PC-9 (cell line): ENCODE measurements at regions of chr5 and their contacts with region 1.

Region 1: GRCh38 chr5:37668524-37669047 is 171.3 kb downstream of the GDNF start:
- DNase-seq: peak; percentile 94 to 100
- H3K4me3 ChIP-seq: peak overlapping the region; percentile 21; the same call in 1 of the 2 replicates
- H3K27ac ChIP-seq: peak overlapping the region; percentile 90
- H3K4me1 ChIP-seq: peaks cover 23% of the 10 kb centered on the region
- H3K27me3 ChIP-seq: no peaks in the 10 kb centered on the region
- CTCF ChIP-seq: no peak

Region 2: DNA sequence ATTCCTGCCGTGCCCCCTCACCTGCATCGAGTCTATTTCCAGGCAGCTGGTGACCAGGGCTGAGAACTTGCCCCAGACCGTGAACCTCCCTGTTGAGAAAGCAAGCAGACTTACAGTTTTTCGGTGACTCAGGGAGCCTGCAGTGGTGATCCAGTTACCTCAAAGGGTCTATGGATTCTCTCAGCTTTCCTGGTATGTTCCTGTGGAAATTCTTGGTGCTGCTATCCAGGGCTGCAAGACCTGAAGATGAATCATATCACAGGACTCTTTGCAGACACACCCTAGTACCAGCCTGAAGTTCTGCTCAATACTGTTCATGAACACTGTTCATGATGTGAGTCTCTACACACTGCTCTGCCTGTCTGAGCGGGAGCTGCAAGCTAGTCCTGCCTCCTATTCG is 134.7 kb before region 1 on chr5:
- CTCF ChIA-PET with region 1: no interaction called
- POLR2A ChIA-PET with region 1: no interaction called
- intact Hi-C with region 1: loop called (anchors 2 kb)
- DNase-seq: peak; percentile 68 to 77
- H3K4me3 ChIP-seq: no peak overlapping the region
- H3K27ac ChIP-seq: peak overlapping the region; percentile 21
- H3K4me1 ChIP-seq: peaks cover 8% of the 10 kb centered on the region; the same call in 1 of the 2 replicates
- H3K27me3 ChIP-seq: no peaks in the 10 kb centered on the region
- CTCF ChIP-seq: no peak

Region 3: GRCh38 chr5:37696190-37697021 is 27.8 kb after region 1 on chr5:
- CTCF ChIA-PET with region 1: interaction called, 7 read pairs
- POLR2A ChIA-PET with region 1: no interaction called
- intact Hi-C with region 1: loop called (anchors 1 kb)
- DNase-seq: peak; percentile 65 to 88
- H3K4me3 ChIP-seq: no peak overlapping the region
- H3K27ac ChIP-seq: peak overlapping the region; percentile 75
- H3K4me1 ChIP-seq: peaks cover 28% of the 10 kb centered on the region
- H3K27me3 ChIP-seq: no peaks in the 10 kb centered on the region
- CTCF ChIP-seq: no peak

Region 4: DNA sequence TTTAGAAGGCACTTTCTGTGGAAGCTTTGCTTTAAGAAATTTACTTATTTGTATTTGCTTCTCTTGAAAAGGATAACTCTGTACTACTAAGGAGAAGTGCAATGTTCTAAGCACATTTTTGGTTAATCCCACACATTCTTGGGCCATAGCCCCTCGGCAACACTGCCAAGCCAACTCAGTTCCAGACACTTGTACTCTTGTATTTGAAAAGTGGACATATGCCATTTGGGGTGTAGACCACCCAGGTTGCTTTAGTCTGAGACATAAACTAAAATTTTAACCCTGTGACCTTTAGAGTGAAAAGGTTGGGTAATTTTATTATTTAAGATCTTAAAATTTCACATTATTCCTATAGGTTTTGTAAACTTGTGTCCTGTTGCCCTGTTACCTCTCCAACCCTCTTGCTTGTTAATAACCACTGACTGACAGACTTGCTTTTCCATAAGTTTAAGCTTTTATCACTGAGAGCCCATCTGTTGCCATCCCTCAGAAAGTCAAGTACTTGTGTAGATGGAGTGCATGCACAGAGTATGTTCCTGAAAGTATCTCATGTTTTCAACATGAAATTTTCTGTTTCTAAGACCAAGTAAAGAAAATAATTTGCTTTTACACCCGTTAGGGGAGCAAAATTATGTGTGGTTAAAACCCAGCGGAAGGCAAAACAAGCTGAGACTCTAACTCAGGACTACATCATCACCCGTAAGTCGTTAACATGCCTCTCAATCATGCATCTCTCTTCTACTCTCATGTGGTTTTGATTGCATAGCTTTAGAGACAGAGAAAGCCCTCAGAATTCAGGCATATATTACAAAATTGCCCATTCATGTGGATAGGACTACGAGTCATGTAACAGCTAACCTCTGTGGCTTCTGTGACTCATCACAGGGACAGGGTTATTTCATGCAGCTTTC is 53.9 kb after region 1 on chr5:
- CTCF ChIA-PET with region 1: no interaction called
- POLR2A ChIA-PET with region 1: no interaction called
- intact Hi-C with region 1: loop called (anchors 1 kb)
- DNase-seq: peak; percentile 32 to 93
- H3K4me3 ChIP-seq: no peak overlapping the region
- H3K27ac ChIP-seq: no peak overlapping the region
- H3K4me1 ChIP-seq: peaks cover 29% of the 10 kb centered on the region
- H3K27me3 ChIP-seq: no peaks in the 10 kb centered on the region
- CTCF ChIP-seq: no peak

Region 5: DNA sequence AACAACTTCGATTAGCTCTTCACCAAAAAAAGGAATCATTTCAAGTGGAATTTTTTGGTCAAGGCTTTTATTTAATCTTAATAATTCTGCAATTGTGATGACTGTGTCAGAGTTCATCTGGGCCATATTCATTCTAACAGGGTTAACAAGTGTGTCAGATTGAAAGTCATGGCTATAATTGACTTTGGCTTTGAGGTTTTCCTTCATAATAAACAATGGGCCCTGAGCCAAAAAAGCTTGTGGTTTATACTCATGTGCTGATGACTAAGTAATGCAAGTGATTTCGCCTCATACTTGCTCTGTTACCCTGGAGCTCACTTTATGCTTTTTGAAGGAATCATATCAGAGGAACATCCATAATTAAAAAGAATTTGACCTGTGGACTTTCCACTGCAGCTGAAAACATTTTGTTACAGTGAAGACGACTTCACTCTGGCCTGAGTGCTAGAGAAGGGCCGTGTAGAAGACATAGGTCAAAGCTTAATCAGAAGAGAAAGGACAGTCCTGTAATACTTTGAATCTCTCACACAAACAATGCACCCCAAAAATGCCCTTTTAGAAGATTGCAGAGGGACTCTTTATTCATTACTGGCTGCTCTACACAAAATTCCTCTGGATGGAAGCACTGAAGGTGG is 69.6 kb after region 1 on chr5:
- CTCF ChIA-PET with region 1: no interaction called
- POLR2A ChIA-PET with region 1: no interaction called
- intact Hi-C with region 1: loop called (anchors 2 kb)
- DNase-seq: peak; percentile 58 to 89
- H3K4me3 ChIP-seq: no peak overlapping the region
- H3K27ac ChIP-seq: peak overlapping the region; percentile 13
- H3K4me1 ChIP-seq: peaks cover 27% of the 10 kb centered on the region
- H3K27me3 ChIP-seq: no peaks in the 10 kb centered on the region
- CTCF ChIP-seq: no peak

Region 6: GRCh38 chr5:37757980-37758583 is 89.5 kb after region 1 on chr5:
- CTCF ChIA-PET with region 1: no interaction called
- POLR2A ChIA-PET with region 1: no interaction called
- intact Hi-C with region 1: no loop called
- DNase-seq: no peak
- H3K4me3 ChIP-seq: no peak overlapping the region
- H3K27ac ChIP-seq: no peak overlapping the region
- H3K4me1 ChIP-seq: no peaks in the 10 kb centered on the region
- H3K27me3 ChIP-seq: no peaks in the 10 kb centered on the region
- CTCF ChIP-seq: no peak

Region 7: GRCh38 chr5:37774912-37775483 is 106.4 kb after region 1 on chr5:
- CTCF ChIA-PET with region 1: no interaction called
- POLR2A ChIA-PET with region 1: no interaction called
- intact Hi-C with region 1: loop called (anchors 1 kb)
- DNase-seq: no peak
- H3K4me3 ChIP-seq: no peak overlapping the region
- H3K27ac ChIP-seq: no peak overlapping the region
- H3K4me1 ChIP-seq: peaks cover 26% of the 10 kb centered on the region
- H3K27me3 ChIP-seq: no peaks in the 10 kb centered on the region
- CTCF ChIP-seq: peak; percentile 92